ENCODE measurements at regions of chr7 and their contacts with region 1.

Region 1: DNA sequence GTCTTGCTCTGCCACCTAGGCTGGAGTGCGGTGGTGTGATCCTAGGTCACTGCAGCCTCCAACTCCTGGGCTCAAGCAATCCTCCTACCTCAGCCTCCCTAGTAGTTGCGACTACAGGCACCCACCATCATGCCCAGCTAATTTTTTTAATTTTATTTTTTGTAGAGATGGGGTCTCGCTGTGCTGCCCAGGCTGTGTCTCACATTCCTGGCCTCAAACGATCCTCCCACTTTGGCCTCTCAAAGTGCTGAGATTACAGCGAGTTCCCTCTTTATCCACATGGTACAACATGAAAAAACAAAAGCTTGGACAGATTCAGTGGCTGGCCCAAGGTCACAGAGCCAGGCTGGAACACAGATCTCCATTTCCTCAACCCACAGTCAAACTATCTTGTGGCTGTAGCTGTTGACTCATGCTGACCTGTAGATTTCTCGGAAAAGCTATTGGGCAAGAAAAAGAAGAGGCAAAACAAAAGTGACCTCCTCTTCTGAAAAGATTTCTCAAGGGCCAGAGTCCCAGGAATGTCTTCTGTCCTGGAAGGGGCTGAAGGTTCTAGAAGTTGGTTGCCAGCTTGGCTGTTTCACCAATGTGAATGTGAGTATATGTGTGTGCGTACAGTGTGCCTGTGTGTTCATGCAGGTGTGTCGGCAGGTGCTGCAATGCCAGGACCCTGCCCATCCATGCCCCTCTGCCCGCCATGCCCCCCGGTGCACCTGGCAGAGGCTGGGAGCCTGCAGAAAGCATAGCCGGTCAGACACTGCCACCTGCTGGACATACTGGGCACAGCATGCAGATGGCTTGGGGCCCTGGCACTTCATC is 28.4 kb downstream of the TMEM130 start:
- DNase-seq: peak; percentile 80
- CTCF ChIP-seq: peak; percentile 99

Region 2: DNA sequence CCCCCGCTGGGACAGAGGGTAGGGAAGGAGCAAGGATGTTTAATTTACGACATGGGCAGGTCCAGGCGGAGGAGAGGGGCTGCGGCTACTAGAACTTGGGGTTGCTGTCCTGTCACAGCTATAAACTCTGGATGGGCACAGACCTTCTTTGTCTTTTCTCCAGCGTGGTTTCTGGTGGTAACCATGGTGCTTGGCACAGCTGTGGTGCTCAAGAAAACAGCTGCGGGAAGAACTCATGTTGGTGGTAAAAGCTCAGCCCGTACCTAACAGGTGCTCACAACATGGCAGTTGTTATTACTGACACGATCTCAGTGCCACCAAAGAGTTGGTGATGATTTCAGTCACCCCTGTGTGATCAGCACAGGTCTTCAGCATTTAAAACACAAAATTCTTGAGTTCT is 454.3 kb before region 1 on chr7:
- in situ Hi-C with region 1: no loop called
- DNase-seq: no peak
- CTCF ChIP-seq: no peak

Region 3: DNA sequence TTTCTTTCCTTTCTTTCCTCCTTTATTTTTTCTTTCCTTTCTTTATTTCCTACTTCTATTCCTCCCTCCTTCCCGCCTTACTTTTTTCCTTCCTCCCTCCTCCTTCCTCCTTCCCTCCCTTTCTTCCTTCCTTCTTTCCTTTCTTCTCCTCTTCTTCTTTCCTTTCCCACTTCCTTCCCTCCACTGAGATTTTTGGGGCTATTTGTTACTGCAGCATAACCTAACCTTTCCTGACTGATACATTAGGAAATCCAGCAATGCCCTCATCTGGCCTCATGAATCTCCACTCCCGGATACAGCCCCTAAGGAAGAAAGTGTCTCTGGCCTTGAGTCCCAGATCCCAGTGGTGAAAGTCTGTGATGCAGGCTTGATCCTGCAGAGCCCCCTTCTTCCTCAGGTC is 401.9 kb before region 1 on chr7:
- in situ Hi-C with region 1: loop called (anchors 5 kb)
- DNase-seq: no peak
- CTCF ChIP-seq: no peak

Region 4: DNA sequence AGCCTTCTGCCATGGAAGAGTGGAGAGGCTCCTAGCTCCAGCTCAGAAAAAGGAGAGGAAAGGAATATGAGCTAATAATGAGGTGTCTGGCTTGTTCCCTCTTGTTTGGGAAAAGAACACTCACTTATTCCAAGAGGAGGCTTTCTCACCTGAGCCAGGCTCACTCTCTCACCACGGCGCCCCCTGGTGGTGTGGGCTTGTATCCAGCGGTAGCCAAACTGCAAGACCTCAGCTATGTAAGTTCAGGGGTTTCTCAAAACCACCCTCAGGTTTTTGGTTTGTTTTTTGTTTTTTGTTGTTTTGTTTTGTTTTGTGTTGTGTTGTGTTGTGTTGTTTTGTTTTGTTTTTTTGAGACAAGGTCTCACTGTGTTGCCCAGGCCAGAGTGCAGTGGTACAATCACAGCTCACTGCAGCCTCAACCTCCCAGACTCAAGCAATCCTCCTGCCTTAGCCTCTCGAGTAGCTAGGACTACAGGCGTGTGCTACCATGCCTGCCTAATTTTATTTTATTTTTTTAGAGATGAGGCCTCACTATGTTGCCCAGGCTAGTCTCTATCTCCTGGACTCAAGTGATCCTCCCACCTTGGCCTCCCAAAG is 95.6 kb before region 1 on chr7:
- in situ Hi-C with region 1: loop called (anchors 25 kb)
- DNase-seq: peak; percentile 77
- CTCF ChIP-seq: peak; percentile 75

Region 5: DNA sequence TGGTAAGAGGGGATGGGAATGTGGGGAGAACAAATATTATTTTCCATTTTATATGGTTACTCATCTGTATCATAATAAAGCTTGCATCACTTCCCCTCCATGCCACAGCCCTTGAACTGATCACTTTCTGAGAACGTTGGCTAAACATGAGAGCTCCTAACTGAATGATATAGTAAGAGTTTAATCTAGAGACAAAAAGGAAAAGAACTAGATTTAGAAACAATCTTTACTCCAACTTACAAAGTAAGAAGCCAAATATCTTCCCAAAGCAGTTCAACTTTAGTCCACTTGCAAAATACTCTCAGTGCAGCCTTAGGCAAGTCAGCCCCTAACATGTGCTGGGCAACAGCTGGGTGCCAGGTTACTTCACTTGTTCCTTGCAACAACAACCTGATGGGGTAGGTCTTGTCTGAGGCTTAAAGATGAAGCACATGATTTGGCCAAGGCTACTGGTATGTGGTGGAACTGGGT is 282.2 kb after region 1 on chr7:
- in situ Hi-C with region 1: no loop called
- DNase-seq: no peak
- CTCF ChIP-seq: no peak

Region 6: GRCh38 chr7:99290980-99291607 is 449.7 kb after region 1 on chr7:
- in situ Hi-C with region 1: no loop called
- DNase-seq: no peak
- CTCF ChIP-seq: no peak

Measured in GM13977 (cell line).